Sciatic nerve (tissue), 2 donors: ENCODE measurements at regions of chr12 and their contacts with region 1.

Region 1: GRCh38 chr12:130563323-130563722 is 152.8 kb downstream of the RIMBP2 start:
- DNase-seq: no peak
- ATAC-seq: no peak

Region 2: DNA sequence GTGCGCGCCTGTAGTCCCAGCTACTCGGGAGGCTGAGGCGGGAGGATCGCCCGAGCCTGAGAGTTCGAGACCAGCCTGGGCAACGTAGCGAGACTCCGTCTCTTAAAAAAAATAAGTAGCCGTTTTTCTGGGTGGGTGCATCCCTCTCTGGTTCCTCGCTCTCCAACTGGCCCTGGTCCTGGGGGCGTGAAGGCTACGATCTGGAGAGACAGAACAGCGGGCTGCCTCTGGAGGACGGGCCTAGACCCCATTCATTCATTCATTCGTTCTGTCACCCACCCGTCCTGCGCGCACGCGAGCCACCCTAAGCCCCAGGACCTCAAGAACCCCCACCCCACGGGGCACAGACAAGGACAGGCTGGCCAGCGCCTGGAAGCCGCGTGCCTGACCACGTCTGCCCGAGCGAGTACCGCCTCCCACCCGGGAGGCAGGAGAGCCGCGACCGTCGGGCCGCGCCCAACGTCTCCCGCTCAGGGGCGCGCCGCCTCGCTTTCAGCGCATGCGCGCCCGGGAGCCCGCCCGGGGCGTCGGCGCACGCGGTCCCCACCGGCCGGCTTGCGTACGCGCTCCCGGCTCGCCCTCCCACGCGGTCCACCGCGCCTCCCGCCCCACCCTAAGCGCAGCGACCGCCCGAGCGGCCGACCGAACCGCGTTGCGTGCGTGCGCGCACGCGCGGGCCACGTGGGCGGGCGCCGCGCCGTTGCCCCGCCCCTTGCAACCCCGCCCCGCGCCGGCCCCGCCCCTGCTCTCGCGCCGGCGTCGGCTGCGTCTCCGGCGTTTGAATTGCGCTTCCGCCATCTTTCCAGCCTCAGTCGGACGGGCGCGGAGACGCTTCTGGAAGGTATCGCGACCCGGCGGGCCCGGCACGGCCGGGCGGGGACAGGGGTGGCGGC is 308.2 kb after region 1 on chr12 and contains the start of gene RAN:
- intact Hi-C with region 1: no loop called
- DNase-seq: peak; percentile 95
- ATAC-seq: peak; percentile 90
- total RNA-seq, gene RAN: 223 TPM

Region 3: GRCh38 chr12:132030367-132031038 is 1467.2 kb after region 1 on chr12:
- intact Hi-C with region 1: loop called (anchors 10 kb)
- DNase-seq: no peak
- ATAC-seq: peak; percentile 53